Posterior cingulate gyrus (tissue), 11 donors: ENCODE measurements at regions of chr5 and their contacts with region 1.

Region 1: GRCh38 chr5:178590141-178590923 is at the start of gene COL23A1:
- DNase-seq: peak in 9 of 10 donors; percentile 30 to 90 (median 56)

Region 2: DNA sequence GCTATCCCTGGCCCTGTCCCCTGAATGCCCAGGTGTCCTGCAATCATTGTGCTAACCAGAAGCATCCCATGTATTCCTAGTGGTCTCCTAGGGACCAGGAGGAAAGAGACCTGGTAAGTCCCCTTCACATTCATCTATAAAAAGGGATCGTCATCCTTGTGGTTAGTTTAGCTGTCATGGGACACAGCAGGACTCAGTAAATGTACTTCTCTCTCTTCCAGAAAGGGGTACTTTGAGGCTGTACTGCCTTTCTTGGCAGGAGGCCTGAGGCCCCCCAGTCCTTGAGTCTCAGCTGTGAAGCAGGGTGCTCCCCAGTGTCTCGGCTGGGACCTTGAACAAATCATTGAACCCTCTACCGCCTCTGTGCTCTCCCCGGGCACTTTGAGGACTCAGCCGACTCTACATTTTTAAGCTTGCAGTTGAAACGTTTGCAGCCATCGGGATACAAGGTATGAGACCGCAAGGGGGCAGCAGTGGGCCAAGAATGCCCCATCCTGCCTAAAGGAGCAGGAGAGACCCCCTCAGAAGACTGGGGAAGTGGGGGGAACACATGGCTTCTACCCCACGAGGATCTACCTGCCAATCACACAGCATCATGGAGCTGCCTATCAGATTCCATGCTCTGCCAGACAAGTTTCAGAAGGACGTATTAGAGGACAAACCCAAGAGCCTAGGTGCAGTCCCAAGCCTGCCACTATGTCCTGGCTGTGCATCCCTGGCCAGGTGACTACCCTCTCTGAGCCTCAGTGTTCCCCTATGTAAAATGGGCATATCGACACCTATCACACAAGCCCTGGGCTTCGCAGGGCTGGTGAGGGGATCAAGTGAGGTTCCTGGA is 355.4 kb before region 1 on chr5:
- intact Hi-C with region 1: loop called (anchors 2 kb)
- DNase-seq: peak; percentile 40 to 95 (median 80)

Region 3: DNA sequence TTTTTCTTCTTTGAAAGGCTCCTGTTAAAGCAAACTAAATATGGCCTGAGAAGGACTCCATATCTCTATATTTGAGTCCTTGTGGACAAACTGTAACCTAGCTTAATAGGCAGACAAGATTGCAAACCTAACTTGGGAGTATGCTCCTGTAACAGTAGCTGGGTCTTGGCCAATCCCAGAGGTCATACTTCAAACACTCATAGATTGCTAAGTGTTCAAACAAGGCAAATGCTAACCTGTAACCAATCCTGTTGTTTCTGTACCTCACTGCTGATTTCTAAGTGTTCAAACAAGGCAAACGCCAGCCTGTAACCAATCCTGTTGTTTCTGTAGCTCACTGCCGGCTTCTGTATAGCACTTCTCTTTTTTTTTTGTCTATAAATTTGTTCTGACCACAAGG is 87.1 kb after region 1 on chr5:
- intact Hi-C with region 1: no loop called
- DNase-seq: no peak